ENCODE measurements at regions of chr7 and their contacts with region 1.

Region 1: DNA sequence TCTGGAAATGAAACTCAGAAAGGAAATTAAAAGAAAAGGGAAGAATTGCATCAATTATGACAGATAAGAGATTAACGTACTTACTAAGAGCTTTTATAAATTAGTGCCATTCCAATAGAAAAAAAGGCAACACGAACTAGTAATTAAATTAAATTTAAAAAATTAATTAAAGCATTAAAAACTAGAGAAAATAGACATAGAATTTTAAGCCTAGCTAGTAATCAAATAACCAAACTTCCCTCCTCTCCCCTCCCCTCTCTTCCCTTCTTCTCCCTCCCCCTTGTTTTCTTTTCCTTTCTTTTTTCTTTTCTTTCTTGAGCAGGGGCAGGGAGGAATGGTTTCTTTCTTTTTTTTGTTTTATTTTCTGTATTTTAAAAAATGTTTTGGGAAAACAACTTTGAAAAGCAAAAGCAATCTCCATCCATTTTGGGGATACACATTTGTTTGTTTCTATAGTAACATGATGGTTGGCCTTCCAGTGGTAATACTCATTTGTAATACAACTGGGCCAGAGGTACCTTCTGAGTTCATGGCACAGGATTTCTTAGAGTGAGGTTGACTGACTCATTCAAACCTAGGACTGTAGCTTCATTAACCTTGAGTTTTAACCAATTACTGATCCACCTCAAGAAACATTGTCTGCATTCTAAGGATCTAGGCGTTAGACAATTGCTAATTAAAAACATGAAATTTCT is 132.6 kb downstream of the ST7 start:
- DNase-seq: no peak
- H3K4me3 Mint-ChIP-seq: no peak overlapping the region
- H3K27ac Mint-ChIP-seq: no peak overlapping the region
- H3K4me1 Mint-ChIP-seq: peaks cover 16% of the 10 kb centered on the region
- H3K27me3 Mint-ChIP-seq: peaks cover 1% of the 10 kb centered on the region

Region 2: DNA sequence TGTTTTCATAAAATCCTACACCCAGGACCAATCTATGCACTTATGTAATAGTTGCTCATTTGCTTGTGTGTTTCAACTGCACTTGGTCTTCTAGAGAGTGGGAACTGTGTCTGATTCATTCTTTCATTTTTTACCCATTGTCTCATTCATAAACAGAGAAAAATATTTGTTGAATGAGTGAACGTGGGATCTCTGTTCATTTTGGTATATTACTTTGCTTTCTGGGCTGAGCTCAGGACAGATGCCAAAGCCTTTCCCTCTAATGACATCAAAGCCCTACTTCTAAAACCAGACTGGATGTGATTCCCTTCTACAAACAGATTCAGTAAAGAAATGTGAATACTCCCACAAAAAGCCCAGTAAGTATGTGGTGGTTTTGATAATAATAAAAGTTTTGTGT is 12.5 kb after region 1 on chr7:
- intact Hi-C with region 1: no loop called
- DNase-seq: no peak
- H3K4me3 Mint-ChIP-seq: no peak overlapping the region
- H3K27ac Mint-ChIP-seq: no peak overlapping the region
- H3K4me1 Mint-ChIP-seq: peaks cover 7% of the 10 kb centered on the region
- H3K27me3 Mint-ChIP-seq: peaks cover 10% of the 10 kb centered on the region

Region 3: DNA sequence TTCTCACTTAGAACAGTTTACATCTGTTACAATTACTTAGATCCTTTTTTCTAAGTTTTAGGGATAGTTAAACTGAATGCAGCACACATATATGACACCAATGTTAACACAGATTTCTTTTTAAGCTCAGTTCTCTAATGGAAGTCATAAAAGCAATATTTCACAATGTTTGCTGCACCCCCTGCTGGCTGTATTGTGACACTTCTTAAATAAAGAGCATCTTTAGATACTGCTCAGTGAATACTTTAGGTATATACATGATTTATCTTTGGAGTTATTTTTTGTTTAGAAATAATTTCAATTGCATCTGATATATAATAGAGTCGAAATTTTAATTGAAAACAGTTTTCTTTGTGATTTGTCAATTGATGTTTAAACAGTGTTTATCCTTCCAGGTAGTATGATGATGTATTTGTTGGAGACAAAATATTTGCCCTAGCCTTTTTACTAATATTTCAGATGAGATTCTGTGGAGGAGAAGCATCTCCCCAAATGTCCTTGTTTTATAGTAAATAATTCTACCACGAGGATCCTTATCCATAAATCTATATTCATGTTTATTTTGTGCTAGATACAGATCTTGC is 41.8 kb after region 1 on chr7:
- intact Hi-C with region 1: loop called (anchors 5 kb)
- DNase-seq: no peak
- H3K4me3 Mint-ChIP-seq: no peak overlapping the region
- H3K27ac Mint-ChIP-seq: no peak overlapping the region
- H3K4me1 Mint-ChIP-seq: peaks cover 22% of the 10 kb centered on the region
- H3K27me3 Mint-ChIP-seq: peaks cover 2% of the 10 kb centered on the region